Activated CD4-positive, alpha-beta T cell treated with anti-CD3 and anti-CD28 coated beads, Interleukin-2, amount 10 ng/mL, durations not matched to agents 24 days and 14 days (primary cell): ENCODE measurements at regions of chr1 and their contacts with region 1.

Region 1: GRCh38 chr1:29235955-29236684 is at the start of gene PTPRU:
- DNase-seq: peak; percentile 96
- H3K4me3 Mint-ChIP-seq: peak within 1 kb of the TSS; percentile 78
- H3K27ac Mint-ChIP-seq: peak within 1 kb of the TSS; percentile 19
- H3K4me1 Mint-ChIP-seq: peaks cover 20% of the 10 kb centered on the region
- H3K27me3 Mint-ChIP-seq: peaks cover 55% of the 10 kb centered on the region
- total RNA-seq, gene PTPRU: 0.47 and 0.95 TPM in 2 replicates

Region 2: DNA sequence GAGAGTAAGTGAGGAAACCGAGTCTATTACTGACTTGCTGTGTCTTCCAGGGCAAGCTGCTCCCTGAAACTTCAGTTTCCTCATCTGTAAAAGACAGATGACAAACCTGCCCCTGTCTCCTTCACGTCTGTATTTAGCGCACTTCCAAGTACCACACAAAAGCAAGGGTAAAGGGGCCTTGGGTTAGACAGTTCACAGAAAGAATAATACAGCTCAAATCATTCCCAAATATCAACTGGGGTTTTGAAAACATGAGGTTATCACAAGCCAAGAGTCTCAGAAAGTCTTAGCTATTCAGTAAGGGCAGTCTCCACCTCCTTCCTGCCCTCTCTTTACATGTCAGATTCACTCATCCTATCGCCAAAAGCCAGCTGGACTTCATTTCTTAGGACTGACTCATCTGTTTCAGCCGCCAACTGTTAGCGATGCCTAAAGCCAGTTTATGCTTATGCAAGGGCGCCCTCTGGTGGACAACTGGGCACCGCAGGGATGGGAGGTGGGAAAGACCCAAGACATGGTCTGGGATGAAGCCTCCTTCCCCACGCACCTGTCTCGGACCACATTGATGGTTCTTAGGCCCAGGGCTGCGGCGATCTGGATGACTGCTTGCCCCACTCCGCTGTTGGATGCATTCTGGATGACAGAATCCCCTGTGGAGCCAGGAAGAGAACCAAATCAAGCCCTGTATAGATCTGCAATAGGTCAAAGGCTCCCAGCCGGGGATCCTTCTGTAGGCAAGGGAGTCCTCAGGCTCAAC is 33.4 kb before region 1 on chr1:
- intact Hi-C with region 1: no loop called
- DNase-seq: peak; percentile 97
- H3K4me3 Mint-ChIP-seq: no peak overlapping the region
- H3K27ac Mint-ChIP-seq: peak overlapping the region; percentile 34
- H3K4me1 Mint-ChIP-seq: peaks cover 15% of the 10 kb centered on the region
- H3K27me3 Mint-ChIP-seq: no peaks in the 10 kb centered on the region

Region 3: GRCh38 chr1:29341936-29342335 is 105.8 kb after region 1 on chr1:
- intact Hi-C with region 1: loop called (anchors 5 kb)
- DNase-seq: no peak
- H3K4me3 Mint-ChIP-seq: no peak overlapping the region
- H3K27ac Mint-ChIP-seq: no peak overlapping the region
- H3K4me1 Mint-ChIP-seq: no peaks in the 10 kb centered on the region
- H3K27me3 Mint-ChIP-seq: peaks cover 33% of the 10 kb centered on the region

Region 4: DNA sequence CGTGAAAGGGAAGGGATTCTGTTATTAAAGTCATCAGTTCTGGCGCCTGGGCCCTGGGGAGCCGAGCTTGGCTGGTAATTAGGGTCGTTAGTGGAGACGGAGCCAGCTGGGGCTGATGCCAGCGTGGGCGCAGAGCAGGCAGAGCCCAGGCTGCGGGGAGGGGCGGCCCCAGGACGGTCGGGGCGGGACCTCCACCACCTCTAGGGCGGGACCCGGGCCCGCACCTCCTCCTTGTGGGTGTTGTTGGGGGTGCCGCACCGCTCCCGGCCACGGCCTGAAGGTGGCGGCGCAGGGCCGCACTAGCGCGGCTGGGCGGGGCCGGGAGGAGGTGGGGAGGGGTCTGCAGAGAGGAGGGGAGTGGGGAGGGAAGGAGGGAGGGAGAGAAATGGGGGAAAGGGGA is 470.8 kb after region 1 on chr1:
- intact Hi-C with region 1: loop called (anchors 5 kb)
- DNase-seq: peak; percentile 92
- H3K4me3 Mint-ChIP-seq: peak overlapping the region; percentile 20
- H3K27ac Mint-ChIP-seq: peak overlapping the region; percentile 50
- H3K4me1 Mint-ChIP-seq: peaks cover 38% of the 10 kb centered on the region
- H3K27me3 Mint-ChIP-seq: peaks cover 16% of the 10 kb centered on the region

Region 5: DNA sequence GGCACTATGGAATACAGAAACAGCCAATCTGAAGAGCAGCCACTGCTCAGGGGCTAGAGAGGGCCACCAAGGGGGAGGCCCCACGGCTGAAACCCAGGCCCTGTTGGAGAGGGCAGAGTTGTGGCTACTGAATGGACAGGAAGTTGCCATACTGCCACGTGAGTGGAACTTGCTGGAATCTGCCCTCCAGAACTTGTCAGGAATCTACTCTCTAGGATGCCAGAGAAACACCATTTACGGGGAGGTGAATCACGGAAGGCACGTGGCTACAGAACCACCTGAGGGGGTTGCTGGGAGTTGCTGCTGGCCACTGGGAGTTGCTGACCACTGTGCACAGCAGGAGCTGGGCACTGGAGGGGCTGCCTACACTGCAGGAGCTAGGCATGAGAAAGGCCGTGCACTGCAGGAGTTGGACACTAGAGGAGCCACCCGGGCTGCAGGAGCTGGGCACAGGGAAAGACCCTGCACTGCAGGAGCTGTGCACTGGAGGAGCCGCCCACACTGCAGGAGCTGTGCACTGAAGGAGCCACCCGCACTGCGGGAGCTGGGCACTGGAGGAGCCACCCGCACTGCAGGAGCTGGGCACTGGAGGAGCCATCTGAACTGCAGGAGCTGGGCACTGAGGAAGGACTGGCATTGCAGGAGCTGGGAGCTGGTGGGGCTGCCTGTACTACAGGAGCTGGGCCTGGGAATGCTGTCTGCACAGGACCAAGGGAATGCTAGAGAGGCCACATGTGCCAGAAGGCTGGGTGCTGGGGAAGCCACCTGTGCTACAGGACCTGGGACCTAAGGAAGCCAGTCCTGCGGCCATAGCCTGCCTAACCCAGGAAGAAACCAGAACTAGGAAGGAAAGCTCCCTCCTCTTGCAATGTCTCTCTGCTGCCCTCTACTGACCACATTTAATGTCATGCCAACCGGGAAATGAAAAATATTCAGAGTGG is 1143.8 kb after region 1 on chr1:
- intact Hi-C with region 1: loop called (anchors 1 kb)
- DNase-seq: peak; percentile 88
- H3K4me3 Mint-ChIP-seq: no peak overlapping the region
- H3K27ac Mint-ChIP-seq: no peak overlapping the region
- H3K4me1 Mint-ChIP-seq: no peaks in the 10 kb centered on the region
- H3K27me3 Mint-ChIP-seq: no peaks in the 10 kb centered on the region

Region 6: DNA sequence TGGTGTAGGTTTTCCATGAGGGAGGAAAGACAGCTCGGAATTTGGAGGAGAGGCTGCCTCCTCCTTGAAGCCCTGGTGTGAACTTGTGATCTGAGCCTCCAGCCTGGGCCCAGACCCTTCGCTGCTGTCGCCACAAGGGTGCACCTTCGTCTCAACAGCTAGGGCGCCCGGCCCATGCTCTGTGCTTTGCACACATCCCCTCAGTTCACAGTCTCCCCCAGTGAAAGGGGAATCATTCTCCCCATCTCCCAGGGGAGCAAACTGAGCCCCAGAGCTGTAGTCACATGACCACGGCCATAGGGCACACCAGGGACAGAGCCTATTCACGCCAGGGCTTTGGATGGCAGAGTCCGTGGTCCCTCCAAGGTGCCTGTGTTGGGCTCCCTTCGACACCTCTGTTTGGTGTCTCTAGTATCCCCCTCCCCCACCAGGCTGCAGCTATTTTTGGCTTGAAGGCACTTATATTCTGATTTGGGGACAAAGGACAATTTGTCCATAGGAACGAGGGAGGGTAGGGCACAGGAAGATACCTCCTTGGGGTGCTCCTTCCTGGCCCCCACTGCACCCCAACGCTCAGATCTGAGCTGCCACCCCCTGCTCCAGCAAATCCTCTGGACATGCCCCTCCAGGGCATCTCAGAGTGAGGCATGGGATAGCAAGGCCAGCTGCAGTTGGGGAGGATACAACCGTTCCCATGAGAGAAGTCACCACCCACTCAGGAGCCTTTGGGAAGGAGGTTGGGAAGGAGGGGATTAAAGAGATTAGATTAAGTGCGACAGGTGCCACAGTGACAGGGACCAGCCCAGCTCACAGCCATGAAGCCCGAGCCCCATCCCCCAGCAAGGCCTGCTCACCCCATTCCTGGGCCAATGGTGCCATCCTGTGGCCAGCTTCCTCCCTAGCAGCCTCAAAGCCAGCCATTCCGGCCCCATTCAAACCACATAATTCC is 1471.6 kb after region 1 on chr1:
- intact Hi-C with region 1: loop called (anchors 5 kb)
- DNase-seq: peak; percentile 86
- H3K4me3 Mint-ChIP-seq: no peak overlapping the region
- H3K27ac Mint-ChIP-seq: no peak overlapping the region
- H3K4me1 Mint-ChIP-seq: no peaks in the 10 kb centered on the region
- H3K27me3 Mint-ChIP-seq: peaks cover 14% of the 10 kb centered on the region